ENCODE measurements at regions of chr1 and their contacts with region 1.

Region 1: DNA sequence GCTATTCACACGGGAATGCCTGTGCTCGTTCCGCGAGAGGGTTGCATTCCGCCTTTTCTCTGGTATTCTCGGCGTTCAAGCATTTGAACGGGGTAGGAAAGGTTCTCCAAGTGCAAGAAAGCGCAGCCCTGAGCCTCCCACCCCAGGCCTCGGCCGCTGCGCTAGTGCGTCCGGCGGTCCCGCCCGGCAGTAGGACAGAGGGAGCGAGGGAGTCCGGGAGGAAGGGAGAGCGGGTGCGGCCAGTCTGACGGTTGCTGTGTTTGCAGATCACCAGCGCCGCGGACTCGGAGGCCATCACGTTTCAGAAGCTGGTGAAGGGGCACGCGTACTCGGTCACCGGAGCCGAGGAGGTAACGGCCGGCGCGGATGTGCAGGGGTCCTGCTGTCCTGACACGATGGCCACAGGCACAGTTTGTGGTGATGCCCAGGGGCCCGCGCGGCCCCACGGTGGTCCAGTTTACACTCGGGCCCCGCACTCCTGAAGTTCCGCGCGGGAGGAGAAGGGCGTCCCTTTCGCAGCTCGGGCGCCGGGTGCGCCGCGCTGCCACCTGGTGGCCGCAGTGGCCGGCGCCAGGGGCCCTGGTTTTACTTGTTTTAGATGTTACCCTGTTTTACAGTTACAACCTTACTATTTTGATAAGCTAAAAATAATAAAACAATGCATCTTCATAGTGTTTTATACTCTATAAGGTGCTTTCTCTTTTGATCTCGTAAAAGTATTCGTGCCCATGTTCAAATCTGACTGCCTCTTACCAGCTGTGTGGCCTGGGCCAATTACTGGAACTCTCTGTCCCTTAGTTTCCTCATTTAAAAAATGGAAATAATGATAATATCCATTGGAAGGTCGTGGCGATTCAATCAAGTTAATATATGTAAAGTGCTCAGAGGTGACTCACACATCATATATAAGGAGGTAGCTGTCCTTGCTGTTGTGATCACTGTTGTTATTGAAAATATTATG is 36.7 kb downstream of the CAPN2 start:
- DNase-seq: peak; percentile 63
- H3K4me3 Mint-ChIP-seq: peak overlapping the region; percentile 59
- H3K27ac Mint-ChIP-seq: no peak overlapping the region
- H3K4me1 Mint-ChIP-seq: peaks cover 3% of the 10 kb centered on the region
- H3K27me3 Mint-ChIP-seq: no peaks in the 10 kb centered on the region

Region 2: DNA sequence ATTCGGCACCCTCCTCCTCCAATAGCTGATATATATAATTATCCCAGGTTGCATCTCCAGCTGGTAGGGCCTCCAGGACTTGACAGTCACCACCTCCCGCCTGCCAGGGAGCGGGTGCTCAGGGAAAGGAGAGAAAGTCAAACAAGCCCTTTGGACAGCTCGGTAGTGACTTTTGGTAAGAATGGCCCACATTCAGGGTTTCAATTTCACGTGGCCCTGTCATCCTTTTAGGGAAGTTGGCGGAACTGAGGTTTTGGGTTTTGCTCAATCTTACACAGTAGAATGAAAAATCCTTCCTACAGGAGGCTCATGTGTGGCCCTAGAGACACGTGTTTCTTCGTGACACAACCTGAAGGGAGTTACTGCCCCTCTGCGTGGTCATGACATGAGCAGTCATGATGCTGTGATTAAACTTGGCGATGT is 127.7 kb before region 1 on chr1:
- CTCF ChIA-PET with region 1: no interaction called
- intact Hi-C with region 1: no loop called
- DNase-seq: no peak
- H3K4me3 Mint-ChIP-seq: no peak overlapping the region
- H3K27ac Mint-ChIP-seq: no peak overlapping the region
- H3K4me1 Mint-ChIP-seq: no peaks in the 10 kb centered on the region
- H3K27me3 Mint-ChIP-seq: no peaks in the 10 kb centered on the region

Region 3: GRCh38 chr1:223700942-223701637 is 48.0 kb before region 1 on chr1:
- CTCF ChIA-PET with region 1: interaction called, 80 read pairs
- intact Hi-C with region 1: loop called (anchors 2 kb)
- DNase-seq: peak; percentile 29
- H3K4me3 Mint-ChIP-seq: no peak overlapping the region
- H3K27ac Mint-ChIP-seq: no peak overlapping the region
- H3K4me1 Mint-ChIP-seq: peaks cover 29% of the 10 kb centered on the region
- H3K27me3 Mint-ChIP-seq: no peaks in the 10 kb centered on the region

Region 4: DNA sequence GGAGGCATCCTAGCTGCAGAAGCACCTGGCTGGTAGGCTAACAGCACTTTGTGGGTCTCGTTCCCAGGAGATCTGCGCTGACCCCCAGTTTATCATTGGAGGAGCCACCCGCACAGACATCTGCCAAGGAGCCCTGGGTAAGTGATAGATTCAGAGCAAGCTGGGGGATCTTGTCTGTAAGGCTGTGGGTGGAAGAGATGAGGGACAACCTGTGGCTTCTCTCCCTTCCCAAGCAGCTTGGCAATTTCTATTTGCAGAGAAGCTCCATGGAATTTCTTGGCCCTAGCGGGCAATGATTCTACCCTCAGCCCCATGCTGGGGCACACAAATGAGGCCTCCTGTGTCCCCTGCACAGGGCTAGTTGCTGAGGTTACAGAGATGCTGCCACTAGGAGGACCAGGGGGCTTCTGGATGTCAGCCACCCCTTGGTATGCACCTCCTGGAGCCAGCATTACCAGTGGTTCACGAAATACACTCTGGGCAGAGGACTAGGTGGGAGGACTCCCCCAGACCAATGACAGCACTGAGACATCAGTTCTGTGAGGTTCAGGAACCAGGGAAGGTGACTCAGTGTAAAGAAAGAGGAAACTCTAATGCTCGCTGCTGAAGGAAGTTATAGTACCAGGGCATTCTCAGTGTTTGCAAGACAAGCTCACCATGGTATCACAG is 31.2 kb before region 1 on chr1:
- CTCF ChIA-PET with region 1: interaction called, 37 read pairs
- intact Hi-C with region 1: no loop called
- DNase-seq: peak; percentile 34
- H3K4me3 Mint-ChIP-seq: no peak overlapping the region
- H3K27ac Mint-ChIP-seq: no peak overlapping the region
- H3K4me1 Mint-ChIP-seq: peaks cover 73% of the 10 kb centered on the region
- H3K27me3 Mint-ChIP-seq: no peaks in the 10 kb centered on the region

Region 5: GRCh38 chr1:223738465-223739365 is 10.3 kb before region 1 on chr1:
- CTCF ChIA-PET with region 1: interaction called, 16 read pairs
- intact Hi-C with region 1: no loop called
- DNase-seq: no peak
- H3K4me3 Mint-ChIP-seq: no peak overlapping the region
- H3K27ac Mint-ChIP-seq: no peak overlapping the region
- H3K4me1 Mint-ChIP-seq: no peaks in the 10 kb centered on the region
- H3K27me3 Mint-ChIP-seq: no peaks in the 10 kb centered on the region